ENCODE measurements at regions of chr13 and their contacts with region 1.

Region 1: GRCh38 chr13:25429466-25430249 is 57.9 kb downstream of the ATP8A2 start:
- DNase-seq: no peak
- ATAC-seq: no peak

Region 2: DNA sequence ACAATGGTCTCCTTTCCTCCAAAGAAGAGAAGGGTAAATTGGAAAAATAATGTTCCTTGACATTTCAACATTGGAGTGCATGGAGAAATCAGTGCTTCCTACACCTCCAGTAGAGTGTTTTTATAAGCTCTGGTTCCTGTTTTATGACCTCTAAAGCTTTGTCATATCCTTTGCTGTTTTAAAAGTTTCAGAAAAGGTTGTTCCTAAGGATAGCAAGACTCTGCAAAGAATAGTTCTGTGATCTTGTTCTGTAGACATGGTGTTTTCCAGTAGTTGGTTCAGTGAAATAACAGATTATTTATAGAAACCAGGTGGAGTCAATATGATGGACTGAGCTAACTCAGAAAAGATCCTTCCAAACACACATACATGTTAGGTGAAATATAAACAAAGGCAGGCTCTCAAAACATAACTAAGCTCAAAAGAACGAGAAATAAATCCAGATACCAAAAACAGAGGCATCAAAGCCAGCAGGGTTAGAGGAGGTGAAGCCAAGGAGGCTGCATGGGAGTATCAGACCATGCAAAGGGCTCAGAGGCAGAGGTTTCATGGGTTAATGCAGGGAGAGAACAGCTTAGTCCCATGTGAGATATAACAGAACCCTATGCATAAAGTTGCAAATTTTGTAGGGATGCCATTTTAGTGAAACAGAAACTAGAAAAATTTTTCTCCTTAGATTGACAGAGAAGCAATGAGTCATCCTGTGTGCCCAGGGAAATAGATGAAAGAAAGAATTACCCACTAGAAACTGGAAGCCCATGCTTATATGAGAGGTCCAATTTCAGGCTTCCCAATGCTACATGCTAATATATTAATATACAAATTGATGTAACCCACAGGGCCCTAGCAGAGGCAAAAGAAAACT is 577.8 kb after region 1 on chr13:
- intact Hi-C with region 1: loop called (anchors 5 kb)
- DNase-seq: no peak
- ATAC-seq: no peak

Region 3: GRCh38 chr13:26348966-26349365 is 919.3 kb after region 1 on chr13:
- intact Hi-C with region 1: no loop called
- DNase-seq: no peak
- ATAC-seq: no peak

Measured in sciatic nerve (tissue), 2 donors.